CD4-positive, alpha-beta memory T cell (primary cell): ENCODE measurements at regions of chr2 and their contacts with region 1.

Region 1: DNA sequence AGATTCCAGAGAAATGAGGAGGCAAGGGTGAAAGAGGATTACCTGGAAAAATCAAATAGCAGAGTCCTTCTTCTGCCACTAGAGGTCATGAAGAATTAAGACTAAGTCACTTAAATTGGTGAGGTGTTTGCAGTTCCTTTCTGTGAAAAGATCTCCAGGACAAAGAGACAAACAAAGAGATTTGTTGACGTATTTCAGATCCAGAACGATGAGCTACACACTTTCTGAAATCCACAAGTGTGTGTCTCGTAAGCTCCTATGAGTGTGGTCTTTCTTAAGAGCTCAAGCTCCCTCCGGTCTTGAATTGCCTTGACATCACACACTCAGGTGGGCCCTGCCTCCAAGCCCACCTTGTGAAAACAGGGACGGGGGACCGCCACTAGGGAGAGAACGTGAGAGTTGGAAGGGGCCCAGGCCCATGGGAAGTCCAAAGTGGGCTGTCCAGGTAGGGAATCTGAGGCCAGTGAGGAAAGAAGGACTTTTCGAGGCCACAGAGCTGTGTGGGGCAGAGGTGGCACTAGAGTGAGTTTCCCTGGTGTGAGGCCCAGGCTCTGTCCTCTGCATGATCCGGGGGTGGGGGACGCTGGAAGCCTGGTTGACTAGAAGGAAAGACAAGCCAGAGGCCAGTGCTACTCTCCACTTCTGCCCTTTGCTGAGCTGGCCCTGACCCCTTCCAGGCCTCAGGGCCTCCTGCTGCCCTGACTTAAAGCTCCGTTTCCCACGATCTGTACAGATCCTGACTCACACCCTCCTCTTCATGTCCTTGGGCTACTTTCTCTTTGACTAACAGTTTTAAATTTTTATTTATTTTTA is 168.1 kb upstream of the NCK2 start:
- DNase-seq: peak in 4 of 5 donors; percentile 47 to 56 (median 52)
- H3K4me3 ChIP-seq: no peak overlapping the region
- H3K4me3 Mint-ChIP-seq: peak overlapping the region in 2 of 8 donors; percentile 0 to 27
- H3K27ac ChIP-seq: no peak overlapping the region
- H3K27ac Mint-ChIP-seq: peak overlapping the region; percentile 6 to 94 (median 91)
- H3K4me1 ChIP-seq: peaks cover 13% of the 10 kb centered on the region
- H3K4me1 Mint-ChIP-seq: peaks cover 9 to 29% (median 14%) of the 10 kb centered on the region in 4 donors
- H3K27me3 ChIP-seq: no peaks in the 10 kb centered on the region
- H3K27me3 Mint-ChIP-seq: peaks cover 7% of the 10 kb centered on the region in 2 donors

Region 2: GRCh38 chr2:105396254-105397024 is 180.2 kb before region 1 on chr2:
- CTCF ChIA-PET with region 1: no interaction called
- POLR2A ChIA-PET with region 1: no interaction called
- intact Hi-C with region 1: no loop called
- DNase-seq: no peak
- H3K4me3 ChIP-seq: no peak overlapping the region
- H3K4me3 Mint-ChIP-seq: no peak overlapping the region
- H3K27ac ChIP-seq: no peak overlapping the region
- H3K27ac Mint-ChIP-seq: no peak overlapping the region
- H3K4me1 ChIP-seq: peaks cover 13% of the 10 kb centered on the region
- H3K4me1 Mint-ChIP-seq: peaks cover 0 to 10% (median 5%) of the 10 kb centered on the region in 4 donors
- H3K27me3 ChIP-seq: no peaks in the 10 kb centered on the region
- H3K27me3 Mint-ChIP-seq: peaks cover 18 to 27% of the 10 kb centered on the region in 2 donors

Region 3: GRCh38 chr2:105537466-105537865 is 39.2 kb before region 1 on chr2:
- CTCF ChIA-PET with region 1: no interaction called
- POLR2A ChIA-PET with region 1: no interaction called
- intact Hi-C with region 1: no loop called
- DNase-seq: no peak
- H3K4me3 ChIP-seq: no peak overlapping the region
- H3K4me3 Mint-ChIP-seq: no peak overlapping the region
- H3K27ac ChIP-seq: no peak overlapping the region
- H3K27ac Mint-ChIP-seq: no peak overlapping the region
- H3K4me1 ChIP-seq: no peaks in the 10 kb centered on the region
- H3K4me1 Mint-ChIP-seq: peaks cover 0 to 2% (median under 1%) of the 10 kb centered on the region in 4 donors
- H3K27me3 ChIP-seq: no peaks in the 10 kb centered on the region
- H3K27me3 Mint-ChIP-seq: peaks cover 2 to 9% of the 10 kb centered on the region in 2 donors

Region 4: DNA sequence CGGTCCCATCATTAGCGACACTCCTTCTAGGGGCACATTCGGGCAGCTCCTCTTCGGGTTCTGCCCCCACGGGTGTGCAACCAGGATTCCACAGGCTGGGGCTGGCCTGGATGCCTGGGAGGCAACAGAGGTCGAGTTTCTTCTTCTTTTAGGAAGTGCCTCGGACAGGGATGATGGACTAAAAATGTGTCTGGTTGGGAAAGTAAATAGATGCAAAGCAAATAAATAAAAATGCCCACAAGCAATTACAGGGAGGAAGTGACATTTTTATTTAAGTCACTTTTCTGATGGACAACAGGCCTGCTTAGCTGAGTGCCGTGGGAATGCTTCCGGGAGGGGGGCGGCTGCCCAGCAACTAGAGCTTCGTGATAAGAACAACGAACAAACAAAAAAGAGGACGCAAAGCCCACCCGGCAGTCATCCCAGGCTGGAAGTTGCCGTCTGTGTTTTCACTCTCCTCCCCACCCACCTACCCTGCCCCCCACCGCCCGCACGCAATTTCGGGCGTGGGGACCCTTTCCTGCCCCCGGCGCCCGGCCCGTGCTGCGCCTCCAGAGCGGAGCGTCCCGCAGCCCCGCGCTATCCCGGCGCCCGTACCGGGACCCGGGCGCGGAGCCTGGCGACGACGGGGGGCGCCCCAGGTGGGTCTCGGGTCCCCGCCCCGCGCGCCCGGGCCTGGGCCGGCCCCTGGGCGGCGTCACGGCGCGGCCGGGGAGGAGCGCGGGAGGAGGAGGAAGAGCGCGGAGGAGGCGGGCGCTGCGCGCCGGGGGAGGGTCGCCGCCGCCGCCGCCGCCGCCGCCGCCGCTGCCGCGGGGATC is 167.7 kb after region 1 on chr2:
- CTCF ChIA-PET with region 1: interaction called, 44 read pairs
- POLR2A ChIA-PET with region 1: no interaction called
- intact Hi-C with region 1: loop called (anchors 1 kb)
- DNase-seq: peak; percentile 63 to 71 (median 69)
- H3K4me3 ChIP-seq: peak overlapping the region; percentile 36 to 38
- H3K4me3 Mint-ChIP-seq: peak overlapping the region; percentile 84 to 91 (median 88)
- H3K27ac ChIP-seq: peak overlapping the region; percentile 65
- H3K27ac Mint-ChIP-seq: peak overlapping the region; percentile 87 to 94 (median 93)
- H3K4me1 ChIP-seq: peaks cover 75% of the 10 kb centered on the region
- H3K4me1 Mint-ChIP-seq: peaks cover 60 to 89% (median 73%) of the 10 kb centered on the region in 4 donors
- H3K27me3 ChIP-seq: no peaks in the 10 kb centered on the region
- H3K27me3 Mint-ChIP-seq: no peaks in the 10 kb centered on the region

Region 5: GRCh38 chr2:105775809-105776559 is 199.3 kb after region 1 on chr2:
- CTCF ChIA-PET with region 1: interaction called, 64 read pairs
- POLR2A ChIA-PET with region 1: no interaction called
- intact Hi-C with region 1: no loop called
- DNase-seq: peak in 3 of 5 donors; percentile 48 to 66 (median 48)
- H3K4me3 ChIP-seq: peak overlapping the region; percentile 3 to 55
- H3K4me3 Mint-ChIP-seq: peak overlapping the region; percentile 73 to 90 (median 82)
- H3K27ac ChIP-seq: peak overlapping the region; percentile 71
- H3K27ac Mint-ChIP-seq: peak overlapping the region; percentile 91 to 98 (median 97)
- H3K4me1 ChIP-seq: peaks cover 100% of the 10 kb centered on the region
- H3K4me1 Mint-ChIP-seq: peaks cover 76 to 98% (median 91%) of the 10 kb centered on the region in 4 donors
- H3K27me3 ChIP-seq: no peaks in the 10 kb centered on the region
- H3K27me3 Mint-ChIP-seq: no peaks in the 10 kb centered on the region

Region 6: DNA sequence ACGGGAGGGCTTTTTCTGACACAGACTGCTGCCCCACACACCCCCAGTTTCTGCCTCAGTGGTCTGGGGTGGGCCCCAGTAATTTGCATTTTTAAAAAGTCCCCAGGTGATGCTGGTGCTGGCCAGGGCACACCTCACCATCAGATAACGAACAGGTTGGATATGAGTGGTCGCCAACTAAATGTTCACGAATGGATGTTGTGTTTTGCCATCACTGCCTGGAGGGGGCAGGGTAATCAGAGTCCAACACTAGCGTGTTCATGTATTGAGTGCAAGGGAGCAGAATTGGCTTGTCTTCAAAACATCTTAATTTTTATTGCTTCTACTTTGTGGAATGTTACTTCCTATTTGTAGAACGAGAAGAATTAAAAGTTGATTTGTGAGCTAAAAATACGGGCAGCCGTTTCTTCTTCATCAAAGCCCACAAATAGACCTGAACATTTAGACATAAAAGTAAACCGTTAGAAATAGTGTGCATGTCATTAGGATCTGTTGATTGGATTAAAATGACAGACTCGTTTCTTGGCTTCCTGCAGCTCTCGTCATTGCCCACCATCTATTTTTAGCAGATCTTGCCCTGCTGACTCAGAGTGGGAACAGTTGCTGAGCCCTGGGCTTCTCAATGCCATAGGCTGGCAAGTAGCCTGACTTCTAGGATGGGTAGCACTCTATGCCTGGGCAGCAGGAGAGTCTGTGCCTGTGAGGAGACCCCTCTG is 213.3 kb after region 1 on chr2:
- CTCF ChIA-PET with region 1: interaction called, 280 read pairs
- POLR2A ChIA-PET with region 1: interaction called, 17 read pairs
- intact Hi-C with region 1: loop called (anchors 2 kb)
- DNase-seq: peak; percentile 56 to 92 (median 61)
- H3K4me3 ChIP-seq: peak overlapping the region in 1 of 2 donors; percentile 25
- H3K4me3 Mint-ChIP-seq: peak overlapping the region; percentile 78 to 92 (median 84)
- H3K27ac ChIP-seq: peak overlapping the region; percentile 79
- H3K27ac Mint-ChIP-seq: peak overlapping the region; percentile 92 to 98 (median 96)
- H3K4me1 ChIP-seq: peaks cover 98% of the 10 kb centered on the region
- H3K4me1 Mint-ChIP-seq: peaks cover 80 to 98% (median 87%) of the 10 kb centered on the region in 4 donors
- H3K27me3 ChIP-seq: no peaks in the 10 kb centered on the region
- H3K27me3 Mint-ChIP-seq: no peaks in the 10 kb centered on the region

Region 7: GRCh38 chr2:105888625-105889400 is 312.2 kb after region 1 on chr2:
- CTCF ChIA-PET with region 1: interaction called, 9 read pairs
- POLR2A ChIA-PET with region 1: no interaction called
- intact Hi-C with region 1: loop called (anchors 5 kb)
- DNase-seq: no peak
- H3K4me3 ChIP-seq: no peak overlapping the region
- H3K4me3 Mint-ChIP-seq: peak overlapping the region in 2 of 8 donors; percentile 2 to 21
- H3K27ac ChIP-seq: no peak overlapping the region
- H3K27ac Mint-ChIP-seq: peak overlapping the region in 6 of 7 donors; percentile 25 to 93 (median 58)
- H3K4me1 ChIP-seq: peaks cover 60% of the 10 kb centered on the region
- H3K4me1 Mint-ChIP-seq: peaks cover 54 to 69% (median 63%) of the 10 kb centered on the region in 4 donors
- H3K27me3 ChIP-seq: no peaks in the 10 kb centered on the region
- H3K27me3 Mint-ChIP-seq: no peaks in the 10 kb centered on the region

Region 8: GRCh38 chr2:106085181-106085940 is 508.7 kb after region 1 on chr2:
- CTCF ChIA-PET with region 1: interaction called, 54 read pairs
- POLR2A ChIA-PET with region 1: interaction called, 4 read pairs
- intact Hi-C with region 1: loop called (anchors 1 kb)
- DNase-seq: peak; percentile 68 to 76 (median 73)
- H3K4me3 ChIP-seq: no peak overlapping the region
- H3K4me3 Mint-ChIP-seq: peak overlapping the region; percentile 28 to 90 (median 69)
- H3K27ac ChIP-seq: peak overlapping the region; percentile 42
- H3K27ac Mint-ChIP-seq: peak overlapping the region; percentile 87 to 98 (median 93)
- H3K4me1 ChIP-seq: peaks cover 63% of the 10 kb centered on the region
- H3K4me1 Mint-ChIP-seq: peaks cover 39 to 65% (median 55%) of the 10 kb centered on the region in 4 donors
- H3K27me3 ChIP-seq: no peaks in the 10 kb centered on the region
- H3K27me3 Mint-ChIP-seq: no peaks in the 10 kb centered on the region

Region 9: GRCh38 chr2:106542811-106543259 is 966.2 kb after region 1 on chr2:
- CTCF ChIA-PET with region 1: interaction called, 3 read pairs
- POLR2A ChIA-PET with region 1: no interaction called
- intact Hi-C with region 1: loop called (anchors 1 kb)
- DNase-seq: peak; percentile 53 to 68 (median 59)
- H3K4me3 ChIP-seq: peak overlapping the region in 1 of 2 donors; percentile 15
- H3K4me3 Mint-ChIP-seq: peak overlapping the region; percentile 70 to 89 (median 76)
- H3K27ac ChIP-seq: no peak overlapping the region
- H3K27ac Mint-ChIP-seq: peak overlapping the region in 1 of 7 donors; percentile 82
- H3K4me1 ChIP-seq: peaks cover 5% of the 10 kb centered on the region
- H3K4me1 Mint-ChIP-seq: peaks cover 0 to 4% (median 3%) of the 10 kb centered on the region in 4 donors
- H3K27me3 ChIP-seq: peaks cover 12% of the 10 kb centered on the region
- H3K27me3 Mint-ChIP-seq: peaks cover 22 to 24% of the 10 kb centered on the region in 2 donors